ENCODE measurements at regions of chr17 and their contacts with region 1.

Region 1: GRCh38 chr17:7989781-7990655 is 12.4 kb upstream of the GUCY2D start:
- DNase-seq: peak; percentile 95
- H3K4me3 Mint-ChIP-seq: peak overlapping the region; percentile 51
- H3K27ac Mint-ChIP-seq: peak overlapping the region; percentile 66
- H3K4me1 Mint-ChIP-seq: peaks cover 22% of the 10 kb centered on the region
- H3K27me3 Mint-ChIP-seq: peaks cover under 1% of the 10 kb centered on the region

Region 2: DNA sequence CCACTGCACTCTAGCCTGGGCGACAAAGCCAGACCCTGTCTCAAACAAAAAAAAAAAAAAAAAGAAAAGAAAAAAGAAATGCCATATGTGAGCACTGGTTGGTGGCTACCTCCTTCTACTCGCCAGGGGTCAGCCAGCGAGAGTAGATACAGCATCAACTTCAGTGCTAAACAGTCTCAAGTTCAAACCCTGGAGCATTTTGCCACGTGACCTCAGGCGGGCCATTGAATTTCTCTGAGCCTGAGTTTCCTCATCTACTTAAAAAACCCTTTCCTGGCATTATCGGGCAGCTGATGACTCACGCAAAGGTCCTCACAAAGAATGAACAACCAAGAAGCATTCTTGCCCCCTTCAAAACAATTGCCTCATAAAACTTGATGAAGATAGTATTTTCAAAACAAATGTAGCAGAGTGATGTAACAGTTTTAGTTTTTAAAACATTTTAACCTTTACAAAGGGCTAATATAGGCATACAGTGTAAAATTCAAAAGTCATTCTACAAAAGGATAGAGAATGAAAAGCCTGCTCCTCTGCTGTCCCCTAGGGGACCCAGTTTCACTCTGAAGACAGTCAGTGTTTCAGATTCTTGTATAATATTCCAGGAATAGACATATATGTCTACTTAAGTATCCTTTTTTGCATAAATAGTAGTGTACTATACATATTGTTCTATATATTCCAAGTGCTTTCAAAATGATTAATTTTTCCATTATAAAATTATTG is 244.1 kb before region 1 on chr17:
- CTCF ChIA-PET with region 1: interaction called, 23 read pairs
- POLR2A ChIA-PET with region 1: no interaction called
- intact Hi-C with region 1: loop called (anchors 2 kb)
- DNase-seq: no peak
- H3K4me3 Mint-ChIP-seq: no peak overlapping the region
- H3K27ac Mint-ChIP-seq: no peak overlapping the region
- H3K4me1 Mint-ChIP-seq: no peaks in the 10 kb centered on the region
- H3K27me3 Mint-ChIP-seq: peaks cover 3% of the 10 kb centered on the region

Region 3: GRCh38 chr17:7851438-7852256 is 138.4 kb before region 1 on chr17:
- CTCF ChIA-PET with region 1: interaction called, 15 read pairs
- POLR2A ChIA-PET with region 1: interaction called, 6 read pairs
- intact Hi-C with region 1: loop called (anchors 2 kb)
- DNase-seq: peak; percentile 95
- H3K4me3 Mint-ChIP-seq: peak overlapping the region; percentile 66
- H3K27ac Mint-ChIP-seq: peak overlapping the region; percentile 49
- H3K4me1 Mint-ChIP-seq: peaks cover 56% of the 10 kb centered on the region
- H3K27me3 Mint-ChIP-seq: no peaks in the 10 kb centered on the region

Region 4: DNA sequence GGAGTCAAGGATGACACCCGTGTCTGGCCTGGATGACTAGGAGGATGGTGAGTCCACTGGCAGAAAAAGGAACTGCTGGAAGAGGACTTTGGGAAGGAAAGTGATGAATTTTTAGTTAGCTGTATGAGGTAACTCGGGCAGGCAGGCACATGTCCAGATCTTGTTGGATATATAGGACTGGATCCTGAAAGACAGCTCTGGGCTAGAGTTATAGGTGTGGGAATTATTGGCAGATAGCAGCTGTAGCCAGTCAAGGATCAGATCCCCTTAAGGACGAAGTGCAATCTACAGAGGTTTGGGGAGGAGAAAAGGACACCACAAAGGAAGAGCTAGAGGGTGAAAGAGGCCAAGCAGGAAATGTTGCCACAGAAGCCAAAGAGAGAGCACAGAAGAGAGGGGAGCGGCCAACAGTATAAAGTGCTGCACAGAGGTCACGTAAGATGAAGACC is 122.1 kb before region 1 on chr17:
- CTCF ChIA-PET with region 1: interaction called, 134 read pairs
- POLR2A ChIA-PET with region 1: interaction called, 3 read pairs
- intact Hi-C with region 1: loop called (anchors 1 kb)
- DNase-seq: no peak
- H3K4me3 Mint-ChIP-seq: no peak overlapping the region
- H3K27ac Mint-ChIP-seq: peak overlapping the region; percentile 60
- H3K4me1 Mint-ChIP-seq: peaks cover 25% of the 10 kb centered on the region
- H3K27me3 Mint-ChIP-seq: no peaks in the 10 kb centered on the region

Region 5: DNA sequence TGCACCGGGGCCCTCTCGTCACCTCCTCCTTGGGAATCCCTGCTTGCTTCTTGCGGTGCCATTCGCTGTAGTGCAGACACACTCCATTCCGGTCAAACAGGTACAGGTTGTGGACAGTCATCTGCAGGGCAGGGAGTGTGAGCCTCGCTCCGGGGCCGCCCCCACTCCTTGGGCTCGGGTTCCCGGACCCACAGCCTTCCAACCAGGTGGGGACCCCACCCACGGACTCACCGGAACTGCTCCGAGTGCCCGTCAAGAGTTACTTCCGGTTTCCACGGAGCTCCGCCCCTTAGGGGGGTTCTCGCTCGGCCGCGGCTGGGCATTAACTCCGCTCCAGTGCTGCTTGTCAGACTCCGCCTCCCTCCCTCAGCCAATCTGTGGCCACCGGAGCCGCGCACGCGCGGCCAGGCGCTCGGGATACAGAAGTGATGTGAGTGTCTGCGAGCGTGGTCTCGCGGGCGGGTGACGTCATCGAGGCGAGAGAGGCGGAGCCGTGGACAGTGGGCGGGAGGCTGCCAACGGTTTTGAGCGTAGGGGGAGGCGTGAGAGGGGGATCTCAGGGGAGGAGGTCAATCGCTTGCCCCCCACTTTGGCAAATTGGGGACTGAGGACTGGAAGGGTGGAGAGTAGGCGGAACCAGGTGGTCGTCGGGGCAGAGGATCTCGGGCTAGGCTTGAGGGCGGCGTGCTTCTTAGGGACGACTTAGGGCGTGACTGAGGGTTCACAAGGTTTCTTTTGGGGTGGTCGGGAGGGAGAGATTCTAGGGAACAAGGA is 58.1 kb before region 1 on chr17 and contains the starts of genes CNTROB and TRAPPC1:
- CTCF ChIA-PET with region 1: interaction called, 93 read pairs
- POLR2A ChIA-PET with region 1: interaction called, 4 read pairs
- intact Hi-C with region 1: loop called (anchors 5 kb)
- DNase-seq: peak; percentile 100
- H3K4me3 Mint-ChIP-seq: peak within 1 kb of the TSS; percentile 93
- H3K27ac Mint-ChIP-seq: peak within 1 kb of the TSS; percentile 88
- H3K4me1 Mint-ChIP-seq: peaks cover 47% of the 10 kb centered on the region
- H3K27me3 Mint-ChIP-seq: no peaks in the 10 kb centered on the region
- total RNA-seq, gene CNTROB: 45.9 to 50.1 TPM
- total RNA-seq, gene TRAPPC1: 197 to 201 TPM

Region 6: GRCh38 chr17:8041249-8041928 is 51.4 kb after region 1 on chr17:
- CTCF ChIA-PET with region 1: interaction called, 22 read pairs
- POLR2A ChIA-PET with region 1: no interaction called
- intact Hi-C with region 1: no loop called
- DNase-seq: peak; percentile 62
- H3K4me3 Mint-ChIP-seq: no peak overlapping the region
- H3K27ac Mint-ChIP-seq: no peak overlapping the region
- H3K4me1 Mint-ChIP-seq: no peaks in the 10 kb centered on the region
- H3K27me3 Mint-ChIP-seq: peaks cover 22% of the 10 kb centered on the region

Region 7: DNA sequence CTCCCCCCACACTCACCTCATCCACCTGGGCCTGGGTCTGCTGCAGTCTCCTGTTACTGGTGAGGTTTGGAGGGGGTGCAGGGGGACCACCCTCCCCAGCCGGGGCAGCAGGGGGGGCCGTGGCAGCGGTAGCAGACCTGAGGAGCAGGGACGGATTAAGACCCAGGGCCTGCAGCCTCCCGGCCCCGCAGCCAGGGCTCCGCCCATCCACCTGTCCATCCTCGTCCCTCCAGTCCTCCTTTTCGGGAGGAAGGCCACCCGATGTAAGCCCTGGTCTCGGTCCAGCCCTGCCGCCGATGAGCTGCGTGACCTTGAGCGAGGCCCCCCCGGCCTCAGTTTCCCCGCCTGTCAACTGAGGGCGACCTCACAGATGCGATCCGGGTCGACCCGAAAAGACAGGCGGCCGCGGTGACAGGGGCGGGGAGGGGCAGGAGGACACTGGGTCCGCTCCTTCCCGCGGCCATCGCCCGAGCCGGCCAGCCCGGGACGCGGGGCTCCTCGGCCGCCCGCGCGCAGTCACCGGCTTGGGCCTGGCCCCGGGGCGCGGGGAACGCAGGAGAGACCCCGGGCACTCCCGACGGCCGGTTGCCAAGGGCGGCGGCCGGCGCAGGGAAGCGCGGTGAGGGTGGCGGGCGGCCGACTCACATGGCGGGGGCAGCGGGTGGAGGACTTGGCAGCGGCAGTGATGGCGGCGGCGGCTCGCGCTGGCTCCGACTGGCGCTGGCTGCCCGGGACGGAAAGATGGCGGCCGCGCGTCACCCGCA is 172.4 kb after region 1 on chr17 and contains the start of gene VAMP2:
- CTCF ChIA-PET with region 1: no interaction called
- POLR2A ChIA-PET with region 1: no interaction called
- intact Hi-C with region 1: no loop called
- DNase-seq: peak; percentile 88
- H3K4me3 Mint-ChIP-seq: peak within 1 kb of the TSS; percentile 86
- H3K27ac Mint-ChIP-seq: peak within 1 kb of the TSS; percentile 95
- H3K4me1 Mint-ChIP-seq: peaks cover 52% of the 10 kb centered on the region
- H3K27me3 Mint-ChIP-seq: no peaks in the 10 kb centered on the region
- total RNA-seq, gene VAMP2: 30.1 to 30.4 TPM